ENCODE measurements at regions of chr4 and their contacts with region 1.

Region 1: DNA sequence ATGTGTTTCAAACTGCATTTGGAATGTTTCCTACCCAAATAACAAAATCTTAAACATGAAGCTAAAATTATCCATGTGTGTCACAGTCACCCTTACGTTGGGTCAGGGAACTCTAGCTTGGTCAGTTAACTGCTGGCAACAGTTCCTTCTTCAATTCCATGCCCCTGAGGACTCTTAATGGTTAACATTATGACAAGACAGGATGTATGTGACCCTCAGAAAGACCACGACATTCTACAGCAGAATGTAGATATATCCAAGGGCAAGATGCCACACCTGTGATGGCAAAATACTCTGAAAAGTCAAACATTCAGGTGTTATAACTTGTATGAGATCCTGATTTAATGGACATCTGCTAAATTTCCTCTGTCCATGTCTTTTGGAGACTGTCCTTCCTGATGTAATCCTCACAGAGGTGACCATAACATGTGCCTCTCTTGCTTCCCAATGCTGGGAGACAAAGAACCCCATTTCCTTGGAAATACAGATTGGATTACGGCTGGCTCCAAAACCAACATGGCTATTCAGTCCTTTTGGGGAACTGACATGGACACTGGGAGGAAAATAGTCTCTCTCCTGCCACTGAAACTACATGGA is 39.1 kb downstream of the YTHDC1 start:
- DNase-seq: no peak
- ATAC-seq: no peak
- H3K4me3 ChIP-seq: no peak overlapping the region
- H3K27ac ChIP-seq: no peak overlapping the region
- H3K4me1 ChIP-seq: no peaks in the 10 kb centered on the region
- H3K27me3 ChIP-seq: no peaks in the 10 kb centered on the region
- CTCF ChIP-seq: no peak

Region 2: GRCh38 chr4:68349649-68350360 is 39.1 kb after region 1 on chr4 and contains the start of gene YTHDC1:
- intact Hi-C with region 1: loop called in 1 of 2 experiments (anchors 5 kb)
- DNase-seq: peak; percentile 96 to 98
- ATAC-seq: peak; percentile 97 to 99 (median 98)
- H3K4me3 ChIP-seq: peak within 1 kb of the TSS; percentile 96
- H3K27ac ChIP-seq: peak within 1 kb of the TSS; percentile 99
- H3K4me1 ChIP-seq: peaks cover 34% of the 10 kb centered on the region
- H3K27me3 ChIP-seq: no peaks in the 10 kb centered on the region
- CTCF ChIP-seq: no peak
- total RNA-seq, gene YTHDC1: 35.3 to 58.5 (median 48.1) TPM

Measured in psoas muscle (tissue), 8 donors.